ENCODE measurements at regions of chr7 and their contacts with region 1.

Region 1: DNA sequence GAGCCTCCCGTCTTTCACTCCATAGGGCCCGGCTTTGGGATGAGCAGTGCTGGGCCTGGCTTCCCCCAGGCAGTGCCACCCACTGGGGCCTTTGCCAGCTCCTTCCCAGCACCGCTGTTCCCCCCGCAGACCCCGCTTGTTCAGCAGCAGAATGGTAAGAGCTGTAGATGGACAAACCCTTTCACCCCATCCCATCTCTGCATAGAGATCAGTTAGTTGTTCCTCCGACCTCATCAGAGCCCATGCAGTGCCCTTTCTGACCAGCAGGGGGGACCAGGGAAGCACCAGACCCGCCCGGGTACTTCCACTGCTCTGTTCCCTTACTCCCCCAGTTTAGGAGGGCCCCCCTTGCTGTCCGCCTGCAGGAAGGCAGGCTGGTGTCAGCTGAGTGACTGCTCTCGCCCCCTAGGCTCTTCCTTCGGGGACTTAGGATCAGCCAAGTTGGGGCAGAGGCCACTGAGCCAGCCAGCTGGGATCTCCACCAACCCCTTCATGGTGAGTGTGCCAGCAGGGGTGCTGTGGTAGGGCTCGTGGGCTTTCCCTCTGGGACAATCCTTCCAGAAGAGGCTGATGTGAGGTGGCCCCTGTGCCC is 9.8 kb downstream of the SAP25 start:
- DNase-seq: peak; percentile 92
- H3K4me3 Mint-ChIP-seq: no peak overlapping the region
- H3K27ac Mint-ChIP-seq: no peak overlapping the region
- H3K4me1 Mint-ChIP-seq: peaks cover 36% of the 10 kb centered on the region
- H3K27me3 Mint-ChIP-seq: peaks cover 2% of the 10 kb centered on the region

Region 2: DNA sequence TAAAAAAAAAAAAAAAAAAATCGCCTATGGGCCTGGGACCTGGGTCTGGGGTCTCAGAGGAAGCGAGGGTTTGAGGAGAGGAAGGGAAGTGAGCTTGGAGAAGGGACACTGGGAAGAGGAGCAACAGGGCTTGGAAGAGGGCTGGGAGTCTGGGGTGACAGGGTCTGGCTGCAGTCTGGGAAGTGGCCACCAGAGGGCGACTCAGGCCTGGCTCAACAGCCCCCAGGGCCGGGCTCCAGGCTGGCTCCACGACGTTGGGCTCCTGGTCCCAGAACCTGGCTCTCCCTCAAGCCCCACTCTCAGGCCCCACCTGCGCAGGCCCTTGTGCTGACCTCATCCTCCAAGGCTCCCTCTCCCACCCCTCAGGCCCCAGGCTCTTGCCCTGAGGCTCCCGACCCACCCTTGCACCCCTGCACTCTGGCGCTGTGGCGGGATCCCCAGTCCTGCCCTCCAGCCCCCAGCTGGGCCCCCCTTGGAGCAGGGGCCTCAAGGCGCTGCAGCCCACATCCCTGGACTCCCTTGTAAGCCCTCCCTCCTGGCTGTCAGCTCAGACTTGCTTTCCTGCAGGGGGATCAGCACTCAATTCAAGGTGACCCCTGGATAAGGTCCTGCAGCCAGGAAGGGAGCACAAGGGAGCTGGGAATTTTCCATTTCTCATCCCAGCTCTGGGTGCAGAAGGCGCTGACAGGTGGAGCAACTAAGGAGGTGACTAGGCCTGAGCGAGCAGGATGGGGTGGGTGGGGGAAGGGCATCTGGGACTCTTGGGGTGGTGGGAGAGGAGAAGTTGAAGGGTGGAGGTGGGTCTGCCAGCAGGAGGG is 94.5 kb before region 1 on chr7:
- CTCF ChIA-PET with region 1: interaction called, 36 read pairs
- DNase-seq: peak; percentile 89
- H3K4me3 Mint-ChIP-seq: no peak overlapping the region
- H3K27ac Mint-ChIP-seq: peak overlapping the region; percentile 75
- H3K4me1 Mint-ChIP-seq: peaks cover 36% of the 10 kb centered on the region
- H3K27me3 Mint-ChIP-seq: no peaks in the 10 kb centered on the region

Region 3: DNA sequence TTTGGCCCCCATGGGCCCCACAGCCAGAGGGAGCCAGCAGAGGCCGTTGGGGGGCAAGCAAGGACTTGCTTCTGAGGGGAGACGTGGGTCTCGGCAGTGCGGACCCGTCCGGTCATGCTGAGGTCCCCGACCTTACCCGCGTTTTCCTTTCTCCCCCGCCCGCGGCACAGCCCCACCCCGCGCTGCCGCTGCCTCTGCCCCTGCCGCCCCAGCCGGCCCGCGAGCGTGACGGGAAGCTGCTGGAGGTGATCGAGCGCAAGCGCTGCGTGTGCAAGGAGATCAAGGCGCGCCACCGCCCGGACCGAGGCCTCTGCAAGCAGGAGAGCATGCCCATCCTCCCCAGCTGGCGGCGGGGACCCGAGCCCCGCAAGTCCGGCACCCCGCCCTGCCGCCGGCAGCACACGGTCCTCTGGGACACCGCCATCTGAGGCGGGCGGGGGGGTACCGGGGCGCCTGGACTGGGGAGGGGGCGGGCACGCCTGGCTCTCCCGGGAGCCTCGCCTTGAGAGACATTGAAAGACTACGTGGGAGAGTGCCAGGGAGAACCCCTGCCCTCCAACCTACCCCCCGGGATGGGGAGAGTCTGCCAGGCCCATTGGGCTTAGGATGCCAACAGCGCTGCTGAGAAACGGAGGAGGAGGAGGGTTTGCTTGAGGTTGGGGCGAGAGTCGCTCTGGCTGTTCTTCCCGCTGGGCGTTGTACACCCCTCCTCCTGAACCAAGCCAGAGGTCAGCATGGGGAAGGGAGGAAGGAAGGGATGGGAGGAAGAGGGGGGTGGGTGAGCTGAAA is 70.2 kb before region 1 on chr7:
- CTCF ChIA-PET with region 1: interaction called, 12 read pairs
- DNase-seq: peak; percentile 81
- H3K4me3 Mint-ChIP-seq: peak overlapping the region; percentile 62
- H3K27ac Mint-ChIP-seq: no peak overlapping the region
- H3K4me1 Mint-ChIP-seq: peaks cover 22% of the 10 kb centered on the region
- H3K27me3 Mint-ChIP-seq: peaks cover 82% of the 10 kb centered on the region

Region 4: DNA sequence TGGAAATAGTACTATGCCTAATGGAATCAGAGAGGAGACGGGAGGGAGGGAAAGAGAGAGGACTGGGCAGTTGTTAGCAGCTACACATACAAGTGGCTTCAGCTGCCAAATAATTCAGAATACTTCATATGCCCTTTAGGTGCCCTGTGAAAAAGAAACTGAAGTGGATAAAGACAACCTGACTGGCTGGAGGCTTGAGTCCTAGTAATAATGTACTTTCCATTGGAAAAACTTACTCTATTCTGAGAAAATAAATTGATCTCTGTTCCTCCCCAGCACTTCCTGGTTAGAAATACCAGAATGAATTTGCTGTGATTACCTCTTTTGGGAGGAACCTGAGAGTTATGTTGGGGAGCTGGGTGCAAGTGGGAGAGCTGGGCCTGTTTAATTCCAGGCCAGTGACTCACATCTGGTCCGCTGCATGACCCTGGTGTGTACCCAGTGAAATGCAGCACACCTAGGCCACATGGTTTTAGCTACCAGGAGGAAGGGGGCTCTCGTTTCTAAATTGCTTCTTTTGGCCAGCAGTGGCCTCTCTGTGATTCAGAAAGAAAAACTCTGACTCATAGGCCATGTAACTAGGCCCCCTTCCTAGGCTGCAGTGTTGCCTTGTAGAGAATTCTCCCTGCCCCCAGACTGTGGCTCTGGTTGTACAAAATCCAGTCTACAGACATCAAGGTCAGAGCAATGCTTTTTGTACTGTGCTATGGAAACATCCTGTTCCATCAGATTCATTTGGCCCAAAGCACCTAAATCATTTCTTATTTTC is 18.4 kb before region 1 on chr7:
- CTCF ChIA-PET with region 1: interaction called, 60 read pairs
- DNase-seq: peak; percentile 43
- H3K4me3 Mint-ChIP-seq: peak overlapping the region; percentile 51
- H3K27ac Mint-ChIP-seq: peak overlapping the region; percentile 91
- H3K4me1 Mint-ChIP-seq: peaks cover 96% of the 10 kb centered on the region
- H3K27me3 Mint-ChIP-seq: no peaks in the 10 kb centered on the region

Region 5: GRCh38 chr7:100691676-100692577 is 128.0 kb after region 1 on chr7:
- CTCF ChIA-PET with region 1: interaction called, 14 read pairs
- DNase-seq: peak; percentile 90
- H3K4me3 Mint-ChIP-seq: peak overlapping the region; percentile 92
- H3K27ac Mint-ChIP-seq: peak overlapping the region; percentile 49
- H3K4me1 Mint-ChIP-seq: peaks cover 32% of the 10 kb centered on the region
- H3K27me3 Mint-ChIP-seq: peaks cover 22% of the 10 kb centered on the region

Region 6: GRCh38 chr7:100711369-100711768 is 147.5 kb after region 1 on chr7:
- CTCF ChIA-PET with region 1: no interaction called
- DNase-seq: no peak
- H3K4me3 Mint-ChIP-seq: no peak overlapping the region
- H3K27ac Mint-ChIP-seq: no peak overlapping the region
- H3K4me1 Mint-ChIP-seq: peaks cover 10% of the 10 kb centered on the region
- H3K27me3 Mint-ChIP-seq: peaks cover 2% of the 10 kb centered on the region